A549 (cell line): ENCODE measurements at regions of chr19 and their contacts with region 1.

Region 1: GRCh38 chr19:40702337-40703012 is 12.0 kb upstream of the NUMBL start:
- DNase-seq: peak; percentile 82 to 84
- ATAC-seq: peak; percentile 88 to 96
- H3K4me3 ChIP-seq: no peak overlapping the region
- H3K27ac ChIP-seq: peak overlapping the region in 1 of 2 experiments; percentile 44; a peak in 3 of 6 replicates
- H3K4me1 ChIP-seq: peaks cover 8% of the 10 kb centered on the region; the same call in 2 of the 3 replicates
- CTCF ChIP-seq: peak; percentile 69
- EP300 ChIP-seq: no peak
- POLR2A ChIP-seq: no peak
- RAD21 ChIP-seq: peak; percentile 71 to 83

Region 2: GRCh38 chr19:40658031-40658430 is 44.4 kb before region 1 on chr19:
- CTCF ChIA-PET with region 1: interaction called, 178 read pairs
- POLR2A ChIA-PET with region 1: interaction called, 9 read pairs
- DNase-seq: no peak
- ATAC-seq: no peak
- H3K4me3 ChIP-seq: no peak overlapping the region
- H3K27ac ChIP-seq: no peak overlapping the region
- H3K4me1 ChIP-seq: 0 out of 3 replicates have a peak, but pooled peaks cover 3% of the 10 kb centered on the region
- CTCF ChIP-seq: no peak
- EP300 ChIP-seq: no peak
- POLR2A ChIP-seq: no peak
- RAD21 ChIP-seq: no peak

Region 3: GRCh38 chr19:40690693-40691420 is 11.6 kb before region 1 on chr19:
- CTCF ChIA-PET with region 1: interaction called, 66 read pairs
- POLR2A ChIA-PET with region 1: interaction called, 24 read pairs
- DNase-seq: peak; percentile 98 to 100
- ATAC-seq: peak; percentile 60 to 89
- H3K4me3 ChIP-seq: peak overlapping the region; percentile 73
- H3K27ac ChIP-seq: peak overlapping the region; percentile 93 to 99
- H3K4me1 ChIP-seq: peaks cover 42% of the 10 kb centered on the region
- CTCF ChIP-seq: no peak
- EP300 ChIP-seq: peak in 1 of 2 experiments; percentile 20; a peak in 1 of 5 replicates
- POLR2A ChIP-seq: peak; percentile 79
- RAD21 ChIP-seq: no peak; a peak in 1 of 5 replicates

Region 4: GRCh38 chr19:40721936-40722661 is 19.6 kb after region 1 on chr19:
- CTCF ChIA-PET with region 1: interaction called, 13 read pairs
- POLR2A ChIA-PET with region 1: interaction called, 5 read pairs
- DNase-seq: no peak
- ATAC-seq: no peak
- H3K4me3 ChIP-seq: no peak overlapping the region
- H3K27ac ChIP-seq: peak overlapping the region in 1 of 2 experiments; percentile 12; a peak in 1 of 6 replicates
- H3K4me1 ChIP-seq: peaks cover 33% of the 10 kb centered on the region
- CTCF ChIP-seq: no peak
- EP300 ChIP-seq: no peak
- POLR2A ChIP-seq: no peak
- RAD21 ChIP-seq: no peak

Region 5: GRCh38 chr19:40806488-40807468 is 104.3 kb after region 1 on chr19:
- CTCF ChIA-PET with region 1: interaction called, 18 read pairs
- POLR2A ChIA-PET with region 1: no interaction called
- DNase-seq: peak; percentile 90 to 100
- ATAC-seq: peak; percentile 58 to 81
- H3K4me3 ChIP-seq: no peak overlapping the region
- H3K27ac ChIP-seq: no peak overlapping the region
- H3K4me1 ChIP-seq: peaks cover 43% of the 10 kb centered on the region
- CTCF ChIP-seq: peak; percentile 78
- EP300 ChIP-seq: no peak
- POLR2A ChIP-seq: no peak
- RAD21 ChIP-seq: peak; percentile 62 to 63